ENCODE measurements at regions of chr19 and their contacts with region 1.

Region 1: GRCh38 chr19:23686621-23687423 is at the start of gene ZNF675:
- DNase-seq: peak; percentile 86 to 96 (median 88)
- ATAC-seq: peak; percentile 96
- H3K4me3 ChIP-seq: peak within 1 kb of the TSS; percentile 99
- H3K27ac ChIP-seq: peak within 1 kb of the TSS; percentile 93
- H3K4me1 ChIP-seq: peaks cover 0 to 3% of the 10 kb centered on the region in 2 experiments; a peak in 2 of 5 replicates
- H3K27me3 ChIP-seq: no peaks in the 10 kb centered on the region
- CTCF ChIP-seq: no peak
- EP300 ChIP-seq: no peak
- POLR2A ChIP-seq: peak; percentile 83
- RAD21 ChIP-seq: no peak
- polyA plus RNA-seq, gene ZNF675: 13.2 to 21.3 TPM

Region 2: DNA sequence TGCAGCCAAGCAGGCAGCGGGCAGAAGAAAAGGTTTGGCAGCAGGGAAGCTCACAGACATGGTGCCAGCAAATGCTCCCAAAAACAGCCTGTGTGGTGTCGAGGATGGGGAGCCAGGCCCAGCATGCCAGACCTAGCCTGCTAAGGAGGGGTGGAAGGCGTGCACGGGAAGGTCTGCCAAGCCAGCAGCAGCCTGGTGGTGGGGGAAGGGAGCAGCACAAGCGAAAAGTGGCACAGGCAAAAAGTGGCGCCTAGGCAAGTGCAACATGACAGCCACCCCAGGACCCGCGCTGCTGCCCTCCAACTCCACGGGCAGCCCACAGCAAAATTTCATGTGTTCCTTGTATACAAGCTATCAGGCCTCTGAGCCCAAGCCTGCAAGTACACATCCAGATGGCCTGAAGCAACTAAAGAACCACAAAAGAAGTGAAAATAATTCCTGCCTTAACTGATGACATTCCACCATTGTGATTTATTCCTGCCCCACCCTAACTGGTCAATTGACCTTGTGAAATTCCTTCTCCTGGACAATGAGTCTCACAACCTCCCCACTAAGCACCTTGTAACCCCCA is 137.6 kb before region 1 on chr19:
- CTCF ChIA-PET with region 1: no interaction called
- POLR2A ChIA-PET with region 1: no interaction called
- in situ Hi-C with region 1: no loop called
- intact Hi-C with region 1: no loop called
- DNase-seq: no peak
- ATAC-seq: no peak
- H3K4me3 ChIP-seq: no peak overlapping the region
- H3K27ac ChIP-seq: no peak overlapping the region
- H3K4me1 ChIP-seq: no peaks in the 10 kb centered on the region
- H3K27me3 ChIP-seq: no peaks in the 10 kb centered on the region
- CTCF ChIP-seq: no peak
- EP300 ChIP-seq: no peak
- POLR2A ChIP-seq: no peak
- RAD21 ChIP-seq: no peak

Region 3: GRCh38 chr19:23758187-23759074 is 71.6 kb after region 1 on chr19 and contains the start of gene ZNF681:
- CTCF ChIA-PET with region 1: no interaction called
- POLR2A ChIA-PET with region 1: interaction called, 7 read pairs
- in situ Hi-C with region 1: loop called (anchors 10 kb)
- intact Hi-C with region 1: loop called (anchors 2 kb)
- DNase-seq: peak; percentile 82 to 95 (median 87)
- ATAC-seq: peak; percentile 92
- H3K4me3 ChIP-seq: peak within 1 kb of the TSS; percentile 63
- H3K27ac ChIP-seq: peak within 1 kb of the TSS; percentile 87
- H3K4me1 ChIP-seq: peaks cover 0 to 12% of the 10 kb centered on the region in 2 experiments; a peak in 3 of 5 replicates
- H3K27me3 ChIP-seq: no peaks in the 10 kb centered on the region
- CTCF ChIP-seq: 0 out of 6 replicates have a peak, but pooled peaks of 1 of the 3 experiments have one; percentile 10
- EP300 ChIP-seq: no peak
- POLR2A ChIP-seq: peak; percentile 93
- RAD21 ChIP-seq: no peak
- polyA plus RNA-seq, gene ZNF681: 3.0 to 3.1 TPM

Measured in K562 (cell line).